ENCODE measurements at regions of chr10 and their contacts with region 1.

Region 1: GRCh38 chr10:106301146-106301545 is 863.4 kb downstream of the SORCS1 start:
- DNase-seq: no peak
- H3K4me3 ChIP-seq: no peak overlapping the region
- H3K27ac ChIP-seq: no peak overlapping the region
- H3K4me1 ChIP-seq: no peaks in the 10 kb centered on the region
- H3K27me3 ChIP-seq: no peaks in the 10 kb centered on the region
- CTCF ChIP-seq: no peak

Region 2: DNA sequence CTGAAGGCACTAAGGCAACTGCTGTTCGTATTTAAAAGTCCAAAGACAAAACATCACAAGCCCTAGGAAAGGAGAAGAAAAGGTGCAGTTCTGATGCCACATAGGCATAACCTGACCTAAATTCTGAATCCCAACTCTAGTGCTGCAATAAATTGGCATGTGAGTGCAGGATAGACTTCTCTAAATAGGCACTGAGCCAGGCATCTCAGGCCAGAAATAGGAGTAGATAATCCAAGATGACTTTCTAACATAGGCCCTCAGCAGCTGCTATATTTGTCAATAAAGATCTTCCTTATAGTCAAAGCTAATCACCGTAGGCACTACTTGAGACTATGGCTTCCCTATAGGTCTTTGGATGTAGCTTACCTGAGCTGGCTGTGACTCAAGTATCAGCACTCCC is 300.4 kb before region 1 on chr10:
- CTCF ChIA-PET with region 1: no interaction called
- POLR2A ChIA-PET with region 1: interaction called, 20 read pairs
- intact Hi-C with region 1: no loop called
- DNase-seq: no peak
- H3K4me3 ChIP-seq: no peak overlapping the region
- H3K27ac ChIP-seq: no peak overlapping the region
- H3K4me1 ChIP-seq: no peaks in the 10 kb centered on the region
- H3K27me3 ChIP-seq: no peaks in the 10 kb centered on the region
- CTCF ChIP-seq: no peak